PC-3 (cell line): ENCODE measurements at regions of chr5 and their contacts with region 1.

Region 1: GRCh38 chr5:19577882-19578281 is 410.1 kb downstream of the CDH18 start:
- DNase-seq: no peak
- ATAC-seq: no peak
- H3K4me3 ChIP-seq: no peak overlapping the region
- H3K27ac ChIP-seq: no peak overlapping the region
- H3K4me1 ChIP-seq: no peaks in the 10 kb centered on the region
- H3K27me3 ChIP-seq: no peaks in the 10 kb centered on the region
- CTCF ChIP-seq: no peak

Region 2: GRCh38 chr5:19342942-19343341 is 234.9 kb before region 1 on chr5:
- CTCF ChIA-PET with region 1: no interaction called
- POLR2A ChIA-PET with region 1: interaction called, 15 read pairs
- intact Hi-C with region 1: no loop called
- DNase-seq: no peak
- ATAC-seq: no peak
- H3K4me3 ChIP-seq: no peak overlapping the region
- H3K27ac ChIP-seq: no peak overlapping the region
- H3K4me1 ChIP-seq: no peaks in the 10 kb centered on the region
- H3K27me3 ChIP-seq: no peaks in the 10 kb centered on the region
- CTCF ChIP-seq: no peak